CD8-positive, alpha-beta T cell (primary cell): ENCODE measurements at regions of chr17 and their contacts with region 1.

Region 1: DNA sequence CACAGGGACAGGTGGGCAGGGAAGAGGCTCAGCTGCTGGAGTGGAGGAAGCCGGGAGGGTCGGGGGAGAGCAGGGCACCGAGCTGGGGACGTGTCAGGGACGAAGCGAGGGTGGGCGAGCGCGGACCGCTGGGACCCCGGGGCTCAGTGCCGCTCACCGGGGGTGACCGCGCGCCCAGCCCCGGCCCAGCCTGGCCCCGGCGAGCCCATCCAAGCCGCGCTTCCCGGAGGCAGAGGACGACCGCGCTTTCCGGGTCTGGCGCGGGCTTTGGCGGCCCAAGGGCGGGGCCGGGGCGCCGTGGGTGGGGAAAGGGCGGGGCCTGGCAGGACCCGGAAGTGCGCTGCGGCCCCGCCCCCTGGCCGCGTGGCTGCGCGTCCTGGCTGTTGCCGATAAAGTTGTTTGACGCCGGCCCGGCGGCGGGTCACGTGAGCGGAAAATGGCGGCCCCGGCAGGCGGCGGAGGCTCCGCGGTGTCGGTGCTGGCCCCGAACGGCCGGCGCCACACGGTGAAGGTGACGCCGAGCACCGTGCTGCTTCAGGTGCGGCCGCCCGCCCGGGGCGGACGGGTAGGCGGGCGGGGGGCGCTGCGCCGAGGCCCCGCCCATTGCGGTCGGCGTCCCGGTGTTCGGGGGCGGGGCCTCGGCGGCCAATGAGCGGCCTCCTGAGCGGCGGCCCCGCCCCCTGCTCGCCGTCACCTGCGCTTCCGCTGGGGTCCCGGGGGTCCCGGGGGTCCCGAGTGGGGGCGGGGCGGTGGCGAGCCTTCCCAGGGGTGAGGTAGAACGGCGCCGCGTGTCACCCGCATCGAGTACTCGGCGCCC is at the start of gene ASPSCR1:
- DNase-seq: peak; percentile 73 to 95 (median 90)
- ATAC-seq: peak; percentile 91
- H3K4me3 ChIP-seq: peak within 1 kb of the TSS; percentile 77 to 97
- H3K4me3 Mint-ChIP-seq: peak within 1 kb of the TSS; percentile 97
- H3K27ac ChIP-seq: peak within 1 kb of the TSS; percentile 72 to 83
- H3K27ac Mint-ChIP-seq: peak within 1 kb of the TSS; percentile 95
- H3K4me1 ChIP-seq: peaks cover 29% of the 10 kb centered on the region
- H3K4me1 Mint-ChIP-seq: peaks cover 33% of the 10 kb centered on the region
- H3K27me3 ChIP-seq: no peaks in the 10 kb centered on the region
- H3K27me3 Mint-ChIP-seq: no peaks in the 10 kb centered on the region
- CTCF ChIP-seq: no peak
- total RNA-seq, gene ASPSCR1: 18.6 to 19.5 TPM

Region 2: GRCh38 chr17:81860756-81861518 is 116.5 kb before region 1 on chr17:
- CTCF ChIA-PET with region 1: no interaction called
- POLR2A ChIA-PET with region 1: no interaction called
- intact Hi-C with region 1: no loop called
- DNase-seq: peak; percentile 98 to 100 (median 99)
- ATAC-seq: peak; percentile 87
- H3K4me3 ChIP-seq: peak overlapping the region; percentile 54 to 72
- H3K4me3 Mint-ChIP-seq: peak overlapping the region; percentile 90
- H3K27ac ChIP-seq: peak overlapping the region; percentile 88 to 98
- H3K27ac Mint-ChIP-seq: peak overlapping the region; percentile 98
- H3K4me1 ChIP-seq: peaks cover 33% of the 10 kb centered on the region
- H3K4me1 Mint-ChIP-seq: peaks cover 44% of the 10 kb centered on the region
- H3K27me3 ChIP-seq: no peaks in the 10 kb centered on the region
- H3K27me3 Mint-ChIP-seq: no peaks in the 10 kb centered on the region
- CTCF ChIP-seq: no peak

Region 3: GRCh38 chr17:81871387-81872230 is 105.8 kb before region 1 on chr17:
- CTCF ChIA-PET with region 1: no interaction called
- POLR2A ChIA-PET with region 1: no interaction called
- intact Hi-C with region 1: loop called in 1 of 2 experiments (anchors 1 kb)
- DNase-seq: peak; percentile 90 to 97 (median 96)
- ATAC-seq: peak; percentile 29
- H3K4me3 ChIP-seq: peak overlapping the region; percentile 93 to 94
- H3K4me3 Mint-ChIP-seq: peak overlapping the region; percentile 87
- H3K27ac ChIP-seq: peak overlapping the region; percentile 96 to 98
- H3K27ac Mint-ChIP-seq: peak overlapping the region; percentile 96
- H3K4me1 ChIP-seq: peaks cover 39% of the 10 kb centered on the region
- H3K4me1 Mint-ChIP-seq: peaks cover 40% of the 10 kb centered on the region
- H3K27me3 ChIP-seq: no peaks in the 10 kb centered on the region
- H3K27me3 Mint-ChIP-seq: no peaks in the 10 kb centered on the region
- CTCF ChIP-seq: no peak

Region 4: DNA sequence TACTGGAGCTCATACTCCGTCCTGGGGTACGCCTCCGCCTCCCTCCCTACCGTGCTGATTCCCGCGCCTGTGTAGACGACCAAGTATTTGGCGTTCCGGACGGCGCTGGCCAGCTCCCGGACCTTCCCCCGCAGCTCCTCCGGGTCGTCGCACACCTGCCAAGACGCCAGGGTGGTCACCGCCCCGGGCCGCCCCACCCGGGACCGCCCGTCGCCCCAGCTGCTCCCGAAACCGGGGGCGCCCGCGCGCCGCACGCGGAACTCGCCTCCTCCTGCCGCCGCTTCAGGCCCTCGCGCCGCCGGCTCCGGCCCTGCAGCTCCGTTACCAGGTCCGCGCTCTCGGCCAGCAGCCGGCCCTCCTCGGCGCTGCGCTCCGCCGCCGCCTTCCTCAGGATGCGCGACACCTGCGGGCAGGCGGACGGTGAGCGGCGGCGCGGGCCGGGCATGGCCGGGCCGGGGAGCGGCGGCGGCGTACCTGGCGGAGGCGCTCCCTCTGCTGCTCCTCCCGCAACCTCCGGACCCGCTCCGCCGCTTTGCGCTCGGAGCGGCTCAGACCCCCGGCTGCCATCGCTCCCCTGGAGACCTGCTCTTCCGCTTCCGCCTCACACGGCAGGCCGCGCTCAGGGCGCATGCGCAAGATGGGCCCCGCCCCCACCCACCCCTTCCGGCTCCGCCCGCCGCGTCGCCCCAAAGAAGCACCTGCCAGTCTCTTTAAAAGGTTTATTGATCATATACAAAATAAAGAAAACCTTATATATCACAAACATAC is 59.7 kb before region 1 on chr17 and contains the start of gene SIRT7:
- CTCF ChIA-PET with region 1: no interaction called
- POLR2A ChIA-PET with region 1: no interaction called
- intact Hi-C with region 1: loop called in 1 of 2 experiments (anchors 2 kb)
- DNase-seq: peak; percentile 67 to 92 (median 82)
- ATAC-seq: peak; percentile 93
- H3K4me3 ChIP-seq: peak within 1 kb of the TSS; percentile 63 to 69
- H3K4me3 Mint-ChIP-seq: peak within 1 kb of the TSS; percentile 91
- H3K27ac ChIP-seq: peak within 1 kb of the TSS; percentile 51 to 75
- H3K27ac Mint-ChIP-seq: peak within 1 kb of the TSS; percentile 88
- H3K4me1 ChIP-seq: peaks cover 14% of the 10 kb centered on the region
- H3K4me1 Mint-ChIP-seq: peaks cover 27% of the 10 kb centered on the region
- H3K27me3 ChIP-seq: no peaks in the 10 kb centered on the region
- H3K27me3 Mint-ChIP-seq: no peaks in the 10 kb centered on the region
- CTCF ChIP-seq: no peak
- total RNA-seq, gene SIRT7: 75.2 to 76.1 TPM

Region 5: DNA sequence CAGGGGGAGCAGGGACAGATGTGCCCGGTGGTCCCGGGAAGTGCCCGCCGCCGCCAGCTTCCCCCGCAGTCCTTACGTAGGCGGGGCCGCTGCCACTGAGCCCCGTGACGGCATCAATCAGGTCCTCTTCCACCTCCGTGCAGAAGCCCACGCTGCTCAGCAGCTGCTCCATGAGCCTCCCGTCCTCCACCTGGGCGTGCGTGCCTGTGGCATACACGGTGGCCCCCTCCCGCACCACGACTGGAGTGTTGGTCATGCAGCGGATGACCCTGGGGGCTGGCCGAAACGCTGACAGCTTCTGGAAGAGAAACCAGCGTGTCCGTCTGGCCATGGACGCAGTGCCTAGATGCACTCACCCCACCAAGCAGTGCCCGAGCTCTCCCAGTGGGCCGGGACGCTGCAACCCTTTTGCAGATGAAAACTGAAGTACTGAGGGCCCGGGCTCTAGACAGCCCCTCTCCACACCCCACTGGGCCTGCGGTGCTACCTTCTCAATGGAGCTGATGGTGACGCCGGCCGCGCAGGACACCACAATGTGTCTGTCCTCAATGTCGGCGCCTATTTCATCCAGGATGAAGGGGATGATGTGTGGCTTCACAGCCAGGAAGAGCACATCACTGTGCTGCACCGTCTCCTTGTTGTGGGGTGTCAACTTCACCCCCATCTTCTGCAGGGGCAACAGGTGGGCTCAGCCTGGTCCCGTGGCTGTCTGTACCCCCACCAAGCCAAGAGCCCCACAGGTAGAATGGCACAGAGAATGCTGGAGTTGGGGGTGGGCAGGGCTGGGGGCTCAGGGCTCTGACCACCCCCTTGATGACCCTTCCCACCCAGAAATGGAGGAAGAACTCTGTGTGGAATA is 42.3 kb before region 1 on chr17:
- CTCF ChIA-PET with region 1: no interaction called
- POLR2A ChIA-PET with region 1: no interaction called
- intact Hi-C with region 1: loop called in 1 of 2 experiments (anchors 2 kb)
- DNase-seq: no peak
- ATAC-seq: no peak
- H3K4me3 ChIP-seq: no peak overlapping the region
- H3K4me3 Mint-ChIP-seq: no peak overlapping the region
- H3K27ac ChIP-seq: no peak overlapping the region
- H3K27ac Mint-ChIP-seq: no peak overlapping the region
- H3K4me1 ChIP-seq: peaks cover 9% of the 10 kb centered on the region
- H3K4me1 Mint-ChIP-seq: peaks cover 2% of the 10 kb centered on the region
- H3K27me3 ChIP-seq: no peaks in the 10 kb centered on the region
- H3K27me3 Mint-ChIP-seq: peaks cover 2% of the 10 kb centered on the region
- CTCF ChIP-seq: no peak

Region 6: GRCh38 chr17:81959362-81960129 is 17.9 kb before region 1 on chr17:
- CTCF ChIA-PET with region 1: interaction called, 20 read pairs
- POLR2A ChIA-PET with region 1: interaction called, 3 read pairs
- intact Hi-C with region 1: no loop called
- DNase-seq: peak; percentile 71 to 92 (median 81)
- ATAC-seq: peak; percentile 93
- H3K4me3 ChIP-seq: peak overlapping the region; percentile 8 to 35
- H3K4me3 Mint-ChIP-seq: peak overlapping the region; percentile 15
- H3K27ac ChIP-seq: no peak overlapping the region
- H3K27ac Mint-ChIP-seq: no peak overlapping the region
- H3K4me1 ChIP-seq: peaks cover 6% of the 10 kb centered on the region
- H3K4me1 Mint-ChIP-seq: peaks cover 10% of the 10 kb centered on the region
- H3K27me3 ChIP-seq: peaks cover 6 to 22% of the 10 kb centered on the region in 2 experiments
- H3K27me3 Mint-ChIP-seq: peaks cover 13% of the 10 kb centered on the region
- CTCF ChIP-seq: peak; percentile 90

Region 7: GRCh38 chr17:82292251-82293154 is 315.1 kb after region 1 on chr17:
- CTCF ChIA-PET with region 1: no interaction called
- POLR2A ChIA-PET with region 1: no interaction called
- intact Hi-C with region 1: loop called in 1 of 2 experiments (anchors 1 kb)
- DNase-seq: peak; percentile 85 to 98 (median 90)
- ATAC-seq: peak; percentile 85
- H3K4me3 ChIP-seq: peak overlapping the region; percentile 65 to 78
- H3K4me3 Mint-ChIP-seq: peak overlapping the region; percentile 88
- H3K27ac ChIP-seq: peak overlapping the region; percentile 88 to 96
- H3K27ac Mint-ChIP-seq: peak overlapping the region; percentile 94
- H3K4me1 ChIP-seq: peaks cover 26% of the 10 kb centered on the region
- H3K4me1 Mint-ChIP-seq: peaks cover 40% of the 10 kb centered on the region
- H3K27me3 ChIP-seq: no peaks in the 10 kb centered on the region
- H3K27me3 Mint-ChIP-seq: no peaks in the 10 kb centered on the region
- CTCF ChIP-seq: no peak

Region 8: DNA sequence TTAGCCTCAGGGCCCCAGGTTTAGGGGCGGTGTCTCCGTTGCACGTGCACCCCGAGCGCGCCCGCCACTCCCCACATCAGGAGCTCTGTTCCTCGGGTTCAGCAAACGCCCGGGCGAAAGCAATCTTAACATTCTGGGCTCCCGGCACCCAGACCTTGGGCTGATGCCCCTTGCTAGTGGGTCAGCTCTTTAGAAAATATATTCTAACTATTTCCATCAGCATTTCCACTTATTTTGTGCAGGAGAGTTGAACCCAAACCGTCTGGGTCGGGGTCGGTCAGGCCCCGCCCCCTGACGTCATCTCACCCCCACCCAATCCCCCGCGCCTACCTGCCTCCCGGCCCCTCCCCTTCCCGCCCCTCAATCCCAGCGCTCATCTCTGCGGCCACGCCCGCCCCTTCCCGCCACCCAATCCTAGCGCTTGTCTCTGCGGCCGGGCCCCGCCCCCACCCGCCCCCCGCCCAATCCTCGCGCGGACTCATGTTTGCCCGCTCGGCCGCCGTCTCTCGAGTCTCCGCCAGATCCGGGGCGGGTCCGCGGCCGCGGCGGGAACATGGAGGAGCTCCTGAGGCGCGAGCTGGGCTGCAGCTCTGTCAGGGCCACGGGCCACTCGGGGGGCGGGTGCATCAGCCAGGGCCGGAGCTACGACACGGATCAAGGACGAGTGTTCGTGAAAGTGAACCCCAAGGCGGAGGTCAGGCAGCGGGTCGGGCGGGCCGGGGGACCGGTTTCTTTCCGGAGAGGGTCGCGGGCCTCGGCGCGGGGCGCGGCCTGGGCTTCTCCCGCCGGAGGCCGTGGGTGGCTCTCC is 739.0 kb after region 1 on chr17 and contains the start of gene FN3KRP:
- CTCF ChIA-PET with region 1: no interaction called
- POLR2A ChIA-PET with region 1: no interaction called
- intact Hi-C with region 1: loop called in 1 of 2 experiments (anchors 5 kb)
- DNase-seq: peak; percentile 68 to 98 (median 92)
- ATAC-seq: peak; percentile 92
- H3K4me3 ChIP-seq: peak within 1 kb of the TSS; percentile 67 to 75
- H3K4me3 Mint-ChIP-seq: peak within 1 kb of the TSS; percentile 98
- H3K27ac ChIP-seq: peak within 1 kb of the TSS; percentile 57 to 65
- H3K27ac Mint-ChIP-seq: peak within 1 kb of the TSS; percentile 93
- H3K4me1 ChIP-seq: peaks cover 18% of the 10 kb centered on the region
- H3K4me1 Mint-ChIP-seq: peaks cover 22% of the 10 kb centered on the region
- H3K27me3 ChIP-seq: no peaks in the 10 kb centered on the region
- H3K27me3 Mint-ChIP-seq: no peaks in the 10 kb centered on the region
- CTCF ChIP-seq: no peak
- total RNA-seq, gene FN3KRP: 29.3 to 30.9 TPM